Breast epithelium (tissue), 4 donors: ENCODE measurements at regions of chr11 and their contacts with region 1.

Region 1: GRCh38 chr11:77124488-77124887 is 3.6 kb upstream of the MYO7A start:
- DNase-seq: no peak
- H3K4me3 ChIP-seq: no peak overlapping the region
- H3K27ac ChIP-seq: no peak overlapping the region
- H3K4me1 ChIP-seq: peaks cover 0 to 5% of the 10 kb centered on the region in 2 donors
- H3K27me3 ChIP-seq: no peaks in the 10 kb centered on the region
- CTCF ChIP-seq: no peak
- POLR2A ChIP-seq: no peak

Region 2: DNA sequence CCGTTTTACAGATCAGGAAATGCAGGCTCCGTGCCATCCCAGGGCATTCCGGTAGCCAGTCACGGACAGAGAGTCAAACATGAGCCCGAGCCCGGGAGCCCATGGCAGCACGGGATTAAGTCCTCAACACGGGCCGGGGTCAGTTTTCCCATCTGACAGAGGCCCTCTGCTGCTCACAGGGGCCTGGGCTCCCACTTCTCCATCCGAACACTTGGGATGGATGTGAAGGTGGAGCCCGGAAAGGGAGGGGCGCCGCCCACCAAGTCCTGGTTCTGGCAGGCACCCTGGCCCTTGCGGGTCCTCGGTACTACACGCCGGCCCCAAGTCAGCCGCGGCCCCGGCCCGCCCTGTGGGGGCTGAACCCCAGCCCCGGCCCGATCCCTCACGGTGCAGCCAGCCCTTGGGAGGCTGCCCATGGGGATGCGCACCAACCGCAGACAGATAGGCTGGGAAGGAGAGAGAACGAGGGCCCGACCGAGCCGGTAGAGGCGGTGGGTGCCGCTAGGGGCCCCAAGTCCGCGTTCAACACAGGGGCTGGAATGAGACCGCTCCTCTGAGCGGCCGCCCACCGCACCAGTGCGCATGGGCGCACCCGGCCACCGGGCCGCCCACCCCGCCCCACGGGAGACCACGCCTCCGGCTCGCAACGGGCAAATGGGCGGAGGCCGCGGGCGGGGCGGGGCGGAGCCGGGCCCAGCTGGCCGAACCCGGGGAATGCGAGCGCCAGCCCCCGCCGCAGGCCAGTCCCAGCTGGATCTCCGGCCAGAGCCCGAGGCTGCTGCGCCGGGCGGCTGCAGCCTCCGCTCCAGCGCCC is 58.1 kb before region 1 on chr11 and contains the start of gene CAPN5:
- intact Hi-C with region 1: loop called (anchors 1 kb)
- DNase-seq: peak; percentile 78 to 80
- H3K4me3 ChIP-seq: peak within 1 kb of the TSS; percentile 65 to 94 (median 66)
- H3K27ac ChIP-seq: peak within 1 kb of the TSS; percentile 84 to 98
- H3K4me1 ChIP-seq: no peaks in the 10 kb centered on the region
- H3K27me3 ChIP-seq: no peaks in the 10 kb centered on the region
- CTCF ChIP-seq: peak in 1 of 3 donors; percentile 28
- POLR2A ChIP-seq: peak; percentile 81
- total RNA-seq, gene CAPN5: 2.8 to 6.1 (median 3.6) TPM

Region 3: DNA sequence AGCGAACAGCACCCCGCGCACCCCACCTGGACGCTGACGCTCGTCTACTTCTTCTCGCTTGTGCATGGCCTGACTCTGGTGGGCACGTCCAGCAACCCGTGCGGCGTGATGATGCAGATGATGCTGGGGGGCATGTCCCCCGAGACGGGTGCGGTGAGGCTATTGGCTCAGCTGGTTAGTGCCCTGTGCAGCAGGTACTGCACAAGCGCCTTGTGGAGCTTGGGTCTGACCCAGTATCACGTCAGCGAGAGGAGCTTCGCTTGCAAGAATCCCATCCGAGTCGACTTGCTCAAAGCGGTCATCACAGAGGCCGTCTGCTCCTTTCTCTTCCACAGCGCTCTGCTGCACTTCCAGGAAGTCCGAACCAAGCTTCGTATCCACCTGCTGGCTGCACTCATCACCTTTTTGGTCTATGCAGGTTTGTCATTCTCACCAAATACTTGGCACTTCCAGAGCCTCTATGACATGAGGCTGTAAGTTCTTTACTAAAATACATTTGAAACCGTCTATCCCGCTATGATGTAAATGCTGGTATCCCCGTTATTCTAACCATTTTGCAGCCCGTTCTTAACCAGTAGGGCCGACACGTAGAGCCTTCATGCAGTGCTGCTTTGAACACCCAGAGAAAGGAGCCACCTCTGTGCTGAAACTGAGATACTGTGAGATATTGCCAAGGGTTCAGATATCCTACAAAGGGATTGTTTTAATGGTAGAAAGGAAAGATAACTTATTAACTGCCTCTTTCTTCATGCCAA is 465.9 kb after region 1 on chr11:
- intact Hi-C with region 1: no loop called
- DNase-seq: no peak
- H3K4me3 ChIP-seq: peak overlapping the region; percentile 59 to 78 (median 75)
- H3K27ac ChIP-seq: peak overlapping the region; percentile 10 to 80
- H3K4me1 ChIP-seq: no peaks in the 10 kb centered on the region
- H3K27me3 ChIP-seq: no peaks in the 10 kb centered on the region
- CTCF ChIP-seq: no peak
- POLR2A ChIP-seq: no peak